ENCODE measurements at regions of chr5 and their contacts with region 1.

Region 1: DNA sequence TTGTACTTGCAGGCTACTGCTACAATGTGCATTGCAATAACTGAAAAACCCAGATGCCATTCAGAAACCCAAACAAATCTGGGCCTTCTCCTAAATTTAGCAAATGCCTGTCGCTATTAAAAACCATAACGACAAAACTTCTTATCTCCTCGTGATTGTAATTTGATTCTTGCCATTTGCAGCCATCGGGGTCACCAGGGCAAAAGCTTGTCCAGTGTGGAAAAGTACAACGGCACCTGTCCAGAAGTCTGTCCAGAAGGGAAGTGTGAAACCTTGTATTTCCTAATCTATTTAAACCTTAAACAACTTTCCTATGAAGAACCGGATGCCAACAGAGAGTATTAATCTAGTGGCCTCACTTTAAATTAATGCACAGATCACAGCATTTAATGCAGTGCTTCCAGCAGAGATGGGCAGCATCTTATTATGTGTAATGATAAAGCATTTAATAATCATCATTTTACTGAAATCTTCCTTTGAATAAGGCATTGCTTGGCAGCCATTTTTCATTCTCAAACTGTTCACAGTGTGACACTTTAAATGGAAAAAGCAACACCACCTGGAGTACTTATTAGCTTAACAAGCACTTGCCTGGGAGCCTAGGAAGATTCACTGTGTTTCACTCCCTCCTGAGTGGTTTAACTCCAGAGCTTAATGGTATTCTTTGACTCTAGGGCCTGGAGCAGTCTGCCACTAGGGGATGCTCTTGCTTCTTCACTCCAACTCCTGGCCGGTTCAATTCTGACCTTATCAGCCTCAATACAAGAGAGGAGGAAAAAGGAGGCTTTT is 4.9 kb upstream of the C7 start:
- DNase-seq: peak; percentile 56 to 87 (median 66)
- ATAC-seq: peak; percentile 99
- H3K4me3 ChIP-seq: no peak overlapping the region
- H3K27ac ChIP-seq: no peak overlapping the region
- H3K4me1 ChIP-seq: no peaks in the 10 kb centered on the region
- H3K27me3 ChIP-seq: no peaks in the 10 kb centered on the region
- CTCF ChIP-seq: peak; percentile 92 to 98 (median 98)
- EP300 ChIP-seq: no peak
- POLR2A ChIP-seq: no peak
- RAD21 ChIP-seq: peak; percentile 87 to 98

Region 2: DNA sequence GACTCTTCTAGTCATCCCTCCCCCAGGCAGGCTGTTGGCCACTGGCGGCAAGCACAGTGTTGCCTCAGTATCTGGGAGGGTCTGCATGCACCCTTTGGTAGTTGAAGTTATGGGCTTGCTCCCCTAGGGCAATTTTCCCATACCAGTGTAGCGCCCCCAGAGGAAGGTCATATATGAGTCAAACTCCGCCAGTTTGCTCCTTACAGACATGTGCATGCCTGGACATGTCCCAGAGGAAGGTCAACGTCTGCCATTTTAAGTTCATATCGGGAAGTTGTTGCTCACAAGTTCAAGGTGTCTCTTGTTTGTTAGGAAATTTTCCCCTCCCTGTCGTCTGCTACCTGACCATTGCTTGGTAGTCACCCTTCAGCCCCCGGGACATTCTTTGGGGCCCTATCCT is 218.1 kb after region 1 on chr5:
- CTCF ChIA-PET with region 1: no interaction called
- POLR2A ChIA-PET with region 1: no interaction called
- in situ Hi-C with region 1: no loop called
- intact Hi-C with region 1: loop called (anchors 2 kb)
- DNase-seq: peak in 3 of 4 experiments; percentile 12 to 28 (median 25)
- ATAC-seq: peak; percentile 93
- H3K4me3 ChIP-seq: no peak overlapping the region
- H3K27ac ChIP-seq: no peak overlapping the region
- H3K4me1 ChIP-seq: no peaks in the 10 kb centered on the region
- H3K27me3 ChIP-seq: no peaks in the 10 kb centered on the region
- CTCF ChIP-seq: peak; percentile 30 to 52 (median 42)
- EP300 ChIP-seq: no peak
- POLR2A ChIP-seq: no peak
- RAD21 ChIP-seq: no peak

Region 3: GRCh38 chr5:41636605-41637004 is 732.2 kb after region 1 on chr5:
- CTCF ChIA-PET with region 1: no interaction called
- POLR2A ChIA-PET with region 1: no interaction called
- in situ Hi-C with region 1: no loop called
- intact Hi-C with region 1: loop called (anchors 10 kb)
- DNase-seq: peak in 3 of 4 experiments; percentile 10 to 27 (median 23)
- ATAC-seq: peak; percentile 87
- H3K4me3 ChIP-seq: no peak overlapping the region
- H3K27ac ChIP-seq: no peak overlapping the region
- H3K4me1 ChIP-seq: no peaks in the 10 kb centered on the region
- H3K27me3 ChIP-seq: no peaks in the 10 kb centered on the region
- CTCF ChIP-seq: peak in 2 of 3 experiments; percentile 13 to 41; a peak in 2 of 6 replicates
- EP300 ChIP-seq: no peak
- POLR2A ChIP-seq: no peak
- RAD21 ChIP-seq: no peak

Region 4: DNA sequence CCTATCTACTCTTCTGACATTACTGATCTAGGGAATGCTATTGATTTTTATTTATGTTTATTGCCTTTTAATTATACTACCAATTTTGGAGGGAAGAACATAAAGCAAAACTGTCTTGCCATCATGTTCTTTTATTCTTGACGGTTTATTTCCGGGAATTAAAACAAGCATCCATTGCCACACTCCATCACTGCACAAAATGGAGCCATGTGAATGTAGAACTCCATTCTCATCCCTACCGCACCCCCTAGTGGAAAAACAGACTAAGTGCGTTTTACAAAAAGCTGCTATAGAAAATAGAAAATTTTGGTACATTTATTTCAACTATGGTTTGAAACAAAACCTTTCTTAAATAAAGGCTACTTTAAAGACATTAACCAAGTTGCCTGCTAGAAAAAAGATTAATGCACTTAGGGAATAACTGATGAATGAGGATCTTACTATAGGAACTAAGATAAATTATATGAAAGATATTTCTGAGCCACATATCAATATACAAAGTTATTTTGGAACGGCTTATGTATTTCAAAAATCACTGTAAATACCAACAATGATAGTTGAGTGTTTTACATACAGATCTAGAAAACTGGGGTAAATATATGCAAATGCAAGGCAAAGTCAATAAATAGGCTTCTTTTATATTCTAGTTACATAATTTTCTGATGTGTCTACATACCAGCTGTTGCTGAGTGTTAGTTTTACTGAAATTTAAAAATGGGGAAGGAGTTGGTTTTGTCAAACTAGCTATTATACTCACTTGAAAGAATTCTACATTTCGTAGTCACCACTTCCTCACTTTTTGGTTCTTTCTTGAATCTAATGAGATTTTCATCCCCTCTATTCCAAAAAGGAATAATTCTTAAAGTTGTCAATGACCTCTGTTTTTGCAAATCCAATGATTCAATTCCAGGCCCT is 939.3 kb after region 1 on chr5:
- CTCF ChIA-PET with region 1: interaction called, 3 read pairs
- POLR2A ChIA-PET with region 1: no interaction called
- in situ Hi-C with region 1: no loop called
- intact Hi-C with region 1: loop called (anchors 1 kb)
- DNase-seq: peak; percentile 31 to 71 (median 38)
- ATAC-seq: peak; percentile 89
- H3K4me3 ChIP-seq: no peak overlapping the region
- H3K27ac ChIP-seq: no peak overlapping the region
- H3K4me1 ChIP-seq: no peaks in the 10 kb centered on the region
- H3K27me3 ChIP-seq: no peaks in the 10 kb centered on the region
- CTCF ChIP-seq: peak; percentile 71 to 92 (median 73)
- EP300 ChIP-seq: no peak
- POLR2A ChIP-seq: no peak
- RAD21 ChIP-seq: peak; percentile 91 to 95

Measured in K562 (cell line).